ENCODE measurements at regions of chr3 and their contacts with region 1.

Region 1: GRCh38 chr3:64475037-64475436 is 212.8 kb downstream of the ADAMTS9 start:
- DNase-seq: no peak
- H3K4me3 ChIP-seq: no peak overlapping the region
- H3K27ac ChIP-seq: no peak overlapping the region
- H3K4me1 ChIP-seq: no peaks in the 10 kb centered on the region
- H3K27me3 ChIP-seq: no peaks in the 10 kb centered on the region
- CTCF ChIP-seq: no peak

Region 2: GRCh38 chr3:64392001-64392400 is 83.0 kb before region 1 on chr3:
- CTCF ChIA-PET with region 1: no interaction called
- dilution Hi-C with region 1: loop called (anchors 5 kb)
- in situ Hi-C with region 1: no loop called
- intact Hi-C with region 1: no loop called
- DNase-seq: no peak
- H3K4me3 ChIP-seq: no peak overlapping the region
- H3K27ac ChIP-seq: no peak overlapping the region
- H3K4me1 ChIP-seq: no peaks in the 10 kb centered on the region
- H3K27me3 ChIP-seq: no peaks in the 10 kb centered on the region
- CTCF ChIP-seq: no peak

Region 3: GRCh38 chr3:64405211-64405835 is 69.7 kb before region 1 on chr3:
- CTCF ChIA-PET with region 1: no interaction called
- dilution Hi-C with region 1: no loop called
- in situ Hi-C with region 1: loop called in 1 of 2 experiments (anchors 10 kb)
- intact Hi-C with region 1: no loop called
- DNase-seq: no peak
- H3K4me3 ChIP-seq: no peak overlapping the region
- H3K27ac ChIP-seq: no peak overlapping the region
- H3K4me1 ChIP-seq: no peaks in the 10 kb centered on the region
- H3K27me3 ChIP-seq: no peaks in the 10 kb centered on the region
- CTCF ChIP-seq: no peak